ENCODE measurements at regions of chr2 and their contacts with region 1.

Region 1: GRCh38 chr2:226984750-226985582 is 149.1 kb downstream of the RHBDD1 start:
- DNase-seq: peak in 6 of 9 donors; percentile 9 to 48 (median 38)
- ATAC-seq: peak; percentile 58
- H3K4me3 ChIP-seq: no peak overlapping the region
- H3K4me3 Mint-ChIP-seq: peak overlapping the region in 3 of 10 donors; percentile 16 to 45 (median 20)
- H3K27ac ChIP-seq: no peak overlapping the region
- H3K27ac Mint-ChIP-seq: peak overlapping the region in 6 of 9 donors; percentile 22 to 76 (median 66)
- H3K4me1 ChIP-seq: peaks cover 0 to 7% of the 10 kb centered on the region in 2 donors
- H3K4me1 Mint-ChIP-seq: peaks cover 5 to 33% (median 26%) of the 10 kb centered on the region in 7 donors
- H3K27me3 ChIP-seq: no peaks in the 10 kb centered on the region
- H3K27me3 Mint-ChIP-seq: no peaks in the 10 kb centered on the region

Region 2: DNA sequence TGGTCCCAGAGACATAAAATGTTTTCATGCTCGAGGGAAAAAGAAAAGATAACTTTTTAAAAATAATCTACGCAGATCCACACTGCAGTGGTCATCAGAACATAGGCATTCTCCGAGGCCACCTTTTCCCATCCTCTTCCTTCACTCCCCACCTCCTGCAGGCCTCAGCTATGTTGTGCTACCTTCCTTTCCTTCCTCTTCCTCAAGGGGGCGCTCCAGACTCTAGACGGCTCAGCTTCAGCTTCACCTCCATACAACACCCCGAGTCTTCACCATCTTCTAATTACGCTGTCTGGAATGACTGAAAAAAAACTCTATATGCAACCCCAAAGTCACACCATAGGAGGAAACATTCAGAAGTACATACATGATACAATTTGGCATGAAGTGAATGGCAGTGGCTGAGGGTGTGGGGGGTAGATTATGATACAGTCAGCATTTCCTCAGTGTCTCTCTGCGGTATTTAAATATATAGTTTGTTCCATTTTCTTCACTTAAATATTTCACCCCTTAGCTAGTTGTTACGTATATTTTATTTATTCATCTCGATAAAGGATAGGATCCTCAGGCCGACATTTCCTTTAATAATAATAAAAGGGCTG is 769.0 kb before region 1 on chr2:
- CTCF ChIA-PET with region 1: no interaction called
- POLR2A ChIA-PET with region 1: no interaction called
- intact Hi-C with region 1: loop called in 1 of 2 experiments (anchors 1 kb)
- DNase-seq: peak; percentile 9 to 59 (median 37)
- ATAC-seq: peak; percentile 77
- H3K4me3 ChIP-seq: no peak overlapping the region
- H3K4me3 Mint-ChIP-seq: no peak overlapping the region
- H3K27ac ChIP-seq: no peak overlapping the region
- H3K27ac Mint-ChIP-seq: no peak overlapping the region
- H3K4me1 ChIP-seq: no peaks in the 10 kb centered on the region
- H3K4me1 Mint-ChIP-seq: peaks cover 0 to 2% (median 0%) of the 10 kb centered on the region in 7 donors
- H3K27me3 ChIP-seq: no peaks in the 10 kb centered on the region
- H3K27me3 Mint-ChIP-seq: peaks cover 3 to 12% (median 9%) of the 10 kb centered on the region in 5 donors

Region 3: DNA sequence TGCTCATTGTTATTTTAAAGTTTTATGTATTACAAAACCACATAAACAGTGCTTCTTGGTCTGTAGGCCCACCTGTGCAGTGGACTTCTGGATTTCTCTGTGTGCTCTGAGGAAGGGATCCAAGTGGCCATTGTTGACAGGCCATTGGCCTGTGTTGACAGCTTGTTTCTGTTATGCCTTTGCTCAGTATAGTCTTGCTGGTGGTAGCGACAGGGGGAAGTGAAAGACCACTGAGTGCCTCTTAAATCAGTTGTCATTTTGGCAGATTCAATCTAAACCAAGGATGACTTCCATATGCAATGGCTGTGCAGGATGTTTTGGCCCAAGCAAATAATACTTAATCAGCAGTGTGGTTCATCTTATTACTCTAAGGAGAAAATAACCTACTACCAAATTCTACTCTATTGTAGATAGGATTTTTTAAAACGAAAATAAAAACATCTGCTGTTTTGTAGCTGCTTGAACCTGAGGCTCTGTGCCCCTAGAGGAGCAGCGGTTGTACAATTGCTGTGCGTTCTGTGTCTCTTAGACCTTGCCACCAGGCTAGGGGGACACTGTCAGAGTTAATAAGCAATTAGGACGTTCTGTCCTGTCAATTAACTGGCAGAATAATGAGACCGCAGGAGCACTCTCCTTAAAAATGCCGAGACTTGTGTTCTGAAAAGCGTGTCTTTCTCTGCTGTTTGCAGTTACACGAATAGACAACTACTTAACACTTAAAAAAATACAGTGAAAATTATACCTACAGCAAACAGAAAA is 40.9 kb before region 1 on chr2:
- CTCF ChIA-PET with region 1: no interaction called
- POLR2A ChIA-PET with region 1: no interaction called
- intact Hi-C with region 1: no loop called
- DNase-seq: no peak
- ATAC-seq: no peak
- H3K4me3 ChIP-seq: no peak overlapping the region
- H3K4me3 Mint-ChIP-seq: no peak overlapping the region
- H3K27ac ChIP-seq: no peak overlapping the region
- H3K27ac Mint-ChIP-seq: no peak overlapping the region
- H3K4me1 ChIP-seq: no peaks in the 10 kb centered on the region
- H3K4me1 Mint-ChIP-seq: peaks cover 0 to 4% (median 0%) of the 10 kb centered on the region in 7 donors
- H3K27me3 ChIP-seq: no peaks in the 10 kb centered on the region
- H3K27me3 Mint-ChIP-seq: no peaks in the 10 kb centered on the region

Region 4: DNA sequence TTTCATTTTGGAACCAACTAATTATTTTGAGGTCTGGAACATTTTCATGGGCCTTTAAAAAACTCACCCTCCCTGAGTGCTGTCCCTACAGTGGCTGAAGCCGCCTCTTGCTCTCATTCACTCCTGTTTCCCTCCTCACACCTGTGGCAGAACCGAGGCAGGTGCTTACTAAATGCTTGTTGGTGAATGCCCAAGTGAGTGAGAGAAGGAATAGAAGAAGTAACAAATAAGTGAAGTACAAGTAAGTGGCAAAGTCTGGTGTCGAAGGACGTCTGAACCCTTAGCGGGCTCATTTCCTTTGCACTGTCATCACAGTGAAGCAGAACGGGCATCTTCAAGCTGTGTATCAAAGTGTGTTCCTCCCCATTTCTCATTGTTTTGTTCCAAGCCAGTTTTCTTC is 13.9 kb before region 1 on chr2:
- CTCF ChIA-PET with region 1: no interaction called
- POLR2A ChIA-PET with region 1: no interaction called
- intact Hi-C with region 1: loop called in 1 of 2 experiments (anchors 2 kb)
- DNase-seq: peak in 2 of 9 donors; percentile 8 to 21
- ATAC-seq: no peak
- H3K4me3 ChIP-seq: no peak overlapping the region
- H3K4me3 Mint-ChIP-seq: peak overlapping the region in 9 of 10 donors; percentile 51 to 80 (median 70)
- H3K27ac ChIP-seq: no peak overlapping the region
- H3K27ac Mint-ChIP-seq: peak overlapping the region in 8 of 9 donors; percentile 8 to 87 (median 60)
- H3K4me1 ChIP-seq: no peaks in the 10 kb centered on the region
- H3K4me1 Mint-ChIP-seq: peaks cover 0 to 59% (median 41%) of the 10 kb centered on the region in 7 donors
- H3K27me3 ChIP-seq: no peaks in the 10 kb centered on the region
- H3K27me3 Mint-ChIP-seq: no peaks in the 10 kb centered on the region